ENCODE measurements at regions of chr2 and their contacts with region 1.

Region 1: GRCh38 chr2:190880378-190881073 is at the start of gene GLS:
- DNase-seq: peak; percentile 90 to 95
- H3K4me3 ChIP-seq: peak within 1 kb of the TSS; percentile 63 to 83 (median 76)
- H3K27ac ChIP-seq: no peak within 1 kb of the TSS
- H3K4me1 ChIP-seq: peaks cover 0 to 12% (median 2%) of the 10 kb centered on the region in 4 experiments; a peak in 2 of 7 replicates
- H3K27me3 ChIP-seq: no peaks in the 10 kb centered on the region
- CTCF ChIP-seq: no peak
- EP300 ChIP-seq: no peak
- POLR2A ChIP-seq: peak; percentile 89 to 96
- RAD21 ChIP-seq: no peak
- total RNA-seq, gene GLS: 81.8 and 89.8 TPM in 2 replicates

Region 2: DNA sequence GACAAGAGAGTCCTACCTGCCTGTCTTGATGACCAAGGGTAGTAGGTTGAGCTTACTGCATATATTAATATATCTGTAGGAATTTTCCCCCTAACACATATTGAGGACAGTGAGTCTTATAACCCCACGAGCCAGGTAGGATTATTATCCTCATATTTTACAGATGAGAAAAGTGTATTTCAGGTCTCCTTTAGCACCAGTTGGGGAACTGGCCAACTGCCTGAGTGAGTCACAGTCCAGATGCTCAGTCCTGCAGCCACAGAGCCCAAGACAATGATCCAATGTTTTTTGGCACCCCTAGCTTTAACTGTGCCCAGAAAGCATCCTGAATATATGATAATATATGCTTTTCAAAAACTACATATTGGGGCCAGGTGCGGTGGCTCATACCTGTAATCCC is 30.8 kb before region 1 on chr2:
- CTCF ChIA-PET with region 1: interaction called, 18 read pairs
- POLR2A ChIA-PET with region 1: interaction called, 10 read pairs
- DNase-seq: no peak
- H3K4me3 ChIP-seq: no peak overlapping the region
- H3K27ac ChIP-seq: no peak overlapping the region
- H3K4me1 ChIP-seq: no peaks in the 10 kb centered on the region
- H3K27me3 ChIP-seq: no peaks in the 10 kb centered on the region
- CTCF ChIP-seq: no peak
- EP300 ChIP-seq: no peak
- POLR2A ChIP-seq: no peak
- RAD21 ChIP-seq: no peak

Region 3: DNA sequence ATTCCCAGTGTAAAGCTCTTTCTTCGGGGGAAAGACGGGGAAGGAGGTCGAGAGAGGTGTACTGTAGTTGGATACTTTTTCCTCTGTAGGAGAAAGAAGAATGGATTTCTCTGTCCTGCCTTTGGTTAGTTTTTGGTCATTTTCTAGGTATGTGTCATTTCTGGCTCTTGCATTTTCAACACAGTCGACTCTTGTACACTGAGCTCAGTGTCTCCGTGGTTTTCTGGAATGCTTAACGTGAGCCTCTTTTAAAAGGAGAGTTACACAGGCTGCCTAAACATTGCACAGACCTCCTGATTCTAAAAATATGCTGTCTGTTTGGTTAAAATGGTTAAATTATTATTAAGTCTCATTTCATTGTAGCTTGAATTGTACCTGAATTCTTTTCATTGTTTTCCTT is 21.7 kb before region 1 on chr2:
- CTCF ChIA-PET with region 1: interaction called, 4 read pairs
- POLR2A ChIA-PET with region 1: interaction called, 64 read pairs
- DNase-seq: no peak
- H3K4me3 ChIP-seq: no peak overlapping the region
- H3K27ac ChIP-seq: no peak overlapping the region
- H3K4me1 ChIP-seq: peaks cover 2 to 14% (median 9%) of the 10 kb centered on the region in 4 experiments; a peak in 6 of 7 replicates
- H3K27me3 ChIP-seq: no peaks in the 10 kb centered on the region
- CTCF ChIP-seq: no peak
- EP300 ChIP-seq: no peak
- POLR2A ChIP-seq: no peak
- RAD21 ChIP-seq: no peak

Region 4: DNA sequence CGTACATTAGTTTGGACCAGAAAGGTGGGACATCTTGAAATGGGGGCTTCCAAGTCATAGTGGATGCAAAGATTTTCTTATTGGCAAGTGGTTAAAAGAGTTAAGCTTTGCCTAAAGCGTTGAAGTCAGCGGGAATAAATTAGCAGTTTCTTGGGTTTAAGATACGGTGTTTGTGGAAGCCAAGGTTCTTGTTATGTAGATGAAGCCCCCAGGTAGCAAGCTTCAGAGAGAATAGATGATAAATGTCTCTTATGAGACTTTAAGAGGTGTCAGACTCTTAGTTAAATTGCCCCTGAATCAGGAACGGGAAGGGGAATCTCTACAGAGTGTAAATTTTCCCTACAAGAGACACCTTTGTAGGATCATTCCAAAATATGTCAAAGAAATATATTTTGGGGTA is 10.8 kb before region 1 on chr2:
- CTCF ChIA-PET with region 1: interaction called, 3 read pairs
- POLR2A ChIA-PET with region 1: interaction called, 12 read pairs
- DNase-seq: no peak
- H3K4me3 ChIP-seq: peak overlapping the region in 1 of 4 experiments; percentile 28; a peak in 1 of 8 replicates
- H3K27ac ChIP-seq: no peak overlapping the region
- H3K4me1 ChIP-seq: peaks cover 0 to 2% (median 0%) of the 10 kb centered on the region in 4 experiments; a peak in 2 of 7 replicates
- H3K27me3 ChIP-seq: no peaks in the 10 kb centered on the region
- CTCF ChIP-seq: no peak
- EP300 ChIP-seq: no peak
- POLR2A ChIP-seq: no peak
- RAD21 ChIP-seq: no peak

Region 5: GRCh38 chr2:190891372-190891771 is 10.8 kb after region 1 on chr2:
- CTCF ChIA-PET with region 1: interaction called, 3 read pairs
- POLR2A ChIA-PET with region 1: interaction called, 43 read pairs
- DNase-seq: no peak
- H3K4me3 ChIP-seq: no peak overlapping the region
- H3K27ac ChIP-seq: no peak overlapping the region
- H3K4me1 ChIP-seq: peaks cover 0 to 6% (median 2%) of the 10 kb centered on the region in 4 experiments; a peak in 1 of 7 replicates
- H3K27me3 ChIP-seq: no peaks in the 10 kb centered on the region
- CTCF ChIP-seq: no peak
- EP300 ChIP-seq: no peak
- POLR2A ChIP-seq: no peak
- RAD21 ChIP-seq: no peak

Region 6: DNA sequence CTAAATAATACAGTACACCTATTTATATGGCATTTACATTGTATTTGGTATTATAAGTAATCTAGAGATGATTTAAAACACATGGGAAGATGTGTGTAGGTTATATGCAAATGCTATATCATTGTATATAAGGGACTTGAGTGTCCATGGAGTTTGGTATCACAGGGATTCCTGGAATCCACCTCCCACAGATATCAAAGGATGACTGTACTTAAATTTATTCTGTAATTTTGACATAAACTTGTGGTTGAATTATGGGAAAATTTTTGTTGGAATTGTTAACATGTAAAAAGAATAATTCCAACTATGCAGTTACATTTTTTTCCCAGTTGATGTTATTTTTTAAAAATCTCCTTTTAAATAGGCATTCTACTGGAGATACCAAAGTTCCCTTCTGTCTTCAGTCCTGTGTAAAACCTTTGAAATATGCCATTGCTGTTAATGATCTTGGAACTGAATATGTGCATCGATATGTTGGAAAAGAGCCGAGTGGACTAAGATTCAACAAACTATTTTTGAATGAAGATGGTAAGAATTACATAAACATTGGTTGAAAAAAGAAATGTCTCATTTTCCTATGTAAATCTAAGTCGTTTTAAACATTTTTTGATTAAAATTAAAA is 24.2 kb after region 1 on chr2:
- CTCF ChIA-PET with region 1: interaction called, 3 read pairs
- POLR2A ChIA-PET with region 1: interaction called, 10 read pairs
- DNase-seq: no peak
- H3K4me3 ChIP-seq: no peak overlapping the region
- H3K27ac ChIP-seq: no peak overlapping the region
- H3K4me1 ChIP-seq: 0 out of 7 replicates have a peak, but pooled peaks cover 0 to 2% (median 0%) of the 10 kb centered on the region in 4 experiments
- H3K27me3 ChIP-seq: no peaks in the 10 kb centered on the region
- CTCF ChIP-seq: no peak
- EP300 ChIP-seq: no peak
- POLR2A ChIP-seq: no peak
- RAD21 ChIP-seq: no peak